ENCODE measurements at regions of chr6 and their contacts with region 1.

Region 1: DNA sequence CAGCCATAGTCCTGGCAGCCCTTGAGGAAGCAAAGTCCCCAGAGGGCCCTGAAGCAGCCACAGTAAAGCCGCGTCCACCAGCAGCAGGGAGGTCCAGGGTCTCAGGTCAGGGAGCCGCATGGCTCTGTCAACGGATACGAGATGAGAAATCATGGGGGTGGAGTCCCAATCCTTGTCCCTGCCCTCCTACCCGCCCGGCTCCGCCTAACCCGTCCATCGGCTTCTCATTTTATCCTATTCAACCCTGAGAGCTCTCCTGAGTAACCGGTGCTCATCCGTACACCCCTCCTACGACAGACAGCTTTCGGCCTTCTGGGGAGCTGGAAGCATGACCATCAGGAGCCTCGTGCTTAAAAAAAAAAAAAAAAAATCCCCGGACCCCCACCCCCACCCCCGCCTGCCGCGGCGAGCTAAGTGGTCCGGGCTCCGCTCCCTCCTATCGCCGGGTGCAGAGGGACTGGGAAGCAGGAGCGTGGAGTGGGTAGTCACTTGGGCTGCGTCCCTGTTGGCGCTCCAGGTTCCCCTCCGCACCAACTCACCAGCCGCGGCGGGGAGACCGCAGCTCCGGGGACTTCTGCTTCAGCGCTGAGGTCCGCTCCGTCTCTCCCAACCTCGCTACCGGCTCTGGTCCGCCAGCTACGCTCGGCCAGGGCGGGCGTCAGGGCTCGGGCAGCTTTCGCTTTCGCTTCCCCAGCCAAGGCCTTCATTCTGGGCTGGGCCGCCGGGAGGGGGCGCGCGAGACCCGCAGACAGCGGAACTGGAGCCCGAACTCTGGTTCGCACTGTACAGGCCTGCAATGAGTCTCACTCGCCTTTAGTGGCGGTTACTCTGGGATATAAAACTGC is at the start of gene TAP2:
- DNase-seq: peak in 1 of 2 experiments; percentile 99
- H3K4me3 ChIP-seq: peak within 1 kb of the TSS; percentile 53 to 81 (median 68)
- H3K27ac ChIP-seq: no peak within 1 kb of the TSS
- H3K4me1 ChIP-seq: peaks cover 0 to 7% (median 4%) of the 10 kb centered on the region in 4 experiments; a peak in 5 of 7 replicates
- H3K27me3 ChIP-seq: peaks cover 0 to 7% (median 6%) of the 10 kb centered on the region in 4 experiments; a peak in 4 of 7 replicates
- CTCF ChIP-seq: peak; percentile 70 to 97 (median 95)
- EP300 ChIP-seq: no peak
- POLR2A ChIP-seq: peak in 1 of 2 experiments; percentile 62; a peak in 1 of 3 replicates
- RAD21 ChIP-seq: peak; percentile 92 to 94
- total RNA-seq, gene TAP2: 24.3 and 27.2 TPM in 2 replicates

Region 2: DNA sequence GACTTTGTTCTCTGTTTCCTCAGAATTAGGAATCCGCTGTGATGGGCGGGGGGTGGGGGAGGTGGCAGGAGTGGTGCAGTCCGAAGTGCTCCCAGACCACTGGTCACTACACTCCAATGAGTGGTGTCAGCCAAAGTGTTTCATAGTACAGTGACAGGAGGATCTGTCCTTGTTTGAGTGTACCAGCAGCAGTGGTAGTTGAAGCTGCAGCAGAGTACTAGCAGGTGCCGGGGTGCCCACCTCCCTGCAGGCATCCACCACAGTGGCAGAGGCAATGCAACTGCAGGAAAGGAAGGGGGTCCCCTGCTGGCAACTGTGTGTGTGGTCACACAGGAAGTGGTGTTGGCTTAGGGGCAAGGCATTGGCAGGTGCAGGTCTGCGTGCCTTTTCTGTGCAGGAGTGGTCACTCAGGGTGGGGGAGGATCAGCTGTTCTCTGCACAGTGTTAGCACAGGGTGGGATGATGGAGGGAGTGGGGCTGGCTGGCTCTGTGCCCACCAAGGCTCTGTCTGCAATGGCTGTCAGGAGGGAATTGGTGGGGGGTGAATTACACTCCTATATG is 31.2 kb before region 1 on chr6:
- CTCF ChIA-PET with region 1: interaction called, 13 read pairs
- POLR2A ChIA-PET with region 1: no interaction called
- DNase-seq: no peak
- H3K4me3 ChIP-seq: no peak overlapping the region
- H3K27ac ChIP-seq: no peak overlapping the region
- H3K4me1 ChIP-seq: peaks cover 0 to 3% (median 0%) of the 10 kb centered on the region in 4 experiments; a peak in 1 of 7 replicates
- H3K27me3 ChIP-seq: no peaks in the 10 kb centered on the region
- CTCF ChIP-seq: peak in 2 of 3 experiments; percentile 39 to 48; a peak in 2 of 4 replicates
- EP300 ChIP-seq: no peak
- POLR2A ChIP-seq: no peak
- RAD21 ChIP-seq: peak in 1 of 2 experiments; percentile 13; a peak in 1 of 4 replicates

Region 3: GRCh38 chr6:32853541-32854375 is 15.4 kb after region 1 on chr6 and contains the starts of genes PSMB9 and TAP1:
- CTCF ChIA-PET with region 1: interaction called, 402 read pairs
- POLR2A ChIA-PET with region 1: interaction called, 10 read pairs
- DNase-seq: peak; percentile 80 to 91
- H3K4me3 ChIP-seq: peak within 1 kb of the TSS; percentile 59 to 77 (median 76)
- H3K27ac ChIP-seq: no peak within 1 kb of the TSS; the same call in 1 of the 2 replicates
- H3K4me1 ChIP-seq: peaks cover 0 to 4% (median 1%) of the 10 kb centered on the region in 4 experiments; a peak in 4 of 7 replicates
- H3K27me3 ChIP-seq: peaks cover 6 to 41% (median 36%) of the 10 kb centered on the region in 4 experiments
- CTCF ChIP-seq: peak; percentile 63 to 94 (median 75)
- EP300 ChIP-seq: peak; percentile 16 to 33; a peak in 2 of 3 replicates
- POLR2A ChIP-seq: peak in 1 of 2 experiments; percentile 42; a peak in 2 of 3 replicates
- RAD21 ChIP-seq: peak; percentile 56 to 69
- total RNA-seq, gene PSMB9: 2.9 and 4.5 TPM in 2 replicates
- total RNA-seq, gene TAP1: 16.8 TPM in 2 replicates

Region 4: GRCh38 chr6:32940656-32941213 is 102.4 kb after region 1 on chr6 and contains the start of gene HLA-DMB:
- CTCF ChIA-PET with region 1: interaction called, 12 read pairs
- POLR2A ChIA-PET with region 1: no interaction called
- DNase-seq: peak in 1 of 2 experiments; percentile 62
- H3K4me3 ChIP-seq: peak within 1 kb of the TSS; percentile 6 to 49 (median 26); a peak in 6 of 8 replicates
- H3K27ac ChIP-seq: no peak within 1 kb of the TSS
- H3K4me1 ChIP-seq: peaks cover 0 to 6% (median 1%) of the 10 kb centered on the region in 4 experiments; a peak in 4 of 7 replicates
- H3K27me3 ChIP-seq: no peaks in the 10 kb centered on the region
- CTCF ChIP-seq: no peak
- EP300 ChIP-seq: no peak
- POLR2A ChIP-seq: no peak
- RAD21 ChIP-seq: no peak
- total RNA-seq, gene HLA-DMB: 1.3 and 2.7 TPM in 2 replicates

Region 5: GRCh38 chr6:33204378-33205190 is 366.2 kb after region 1 on chr6 and contains the start of gene HSD17B8:
- CTCF ChIA-PET with region 1: no interaction called
- POLR2A ChIA-PET with region 1: no interaction called
- DNase-seq: peak; percentile 72 to 98
- H3K4me3 ChIP-seq: peak within 1 kb of the TSS; percentile 71 to 93 (median 72)
- H3K27ac ChIP-seq: no peak within 1 kb of the TSS
- H3K4me1 ChIP-seq: peaks cover 4 to 36% (median 11%) of the 10 kb centered on the region in 4 experiments
- H3K27me3 ChIP-seq: peaks cover 9 to 32% (median 25%) of the 10 kb centered on the region in 4 experiments; a peak in 6 of 7 replicates
- CTCF ChIP-seq: no peak
- EP300 ChIP-seq: no peak
- POLR2A ChIP-seq: peak in 1 of 2 experiments; percentile 48; a peak in 2 of 3 replicates
- RAD21 ChIP-seq: no peak
- total RNA-seq, gene HSD17B8: 3.3 and 3.6 TPM in 2 replicates

Measured in H1 (cell line).